ENCODE measurements at regions of chr4 and their contacts with region 1.

Region 1: DNA sequence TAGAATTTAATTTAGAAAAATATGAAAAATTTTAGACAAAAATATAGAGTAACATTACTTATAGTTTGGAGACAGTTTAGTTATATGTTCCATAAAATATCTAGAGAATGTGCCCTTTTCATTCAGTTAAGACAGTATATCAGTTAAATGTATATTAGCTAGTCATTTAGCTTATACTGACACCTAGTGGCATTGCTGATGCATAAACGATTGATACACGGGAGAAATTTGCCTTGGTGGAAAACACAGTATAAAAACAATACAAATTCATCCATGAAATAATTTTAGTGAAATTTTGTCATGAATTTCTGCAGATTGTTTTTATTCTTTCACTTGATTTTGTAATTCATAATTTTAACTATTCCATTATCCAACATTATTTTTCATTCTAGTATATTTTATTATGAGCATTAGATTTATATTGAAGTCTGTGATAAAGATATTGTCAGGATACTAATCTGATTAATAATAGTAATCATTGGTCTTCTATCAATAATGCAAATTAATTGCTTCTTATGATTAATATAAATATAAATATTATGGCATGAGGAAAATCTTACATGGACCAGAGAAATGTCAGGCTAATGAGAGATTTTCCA is 219.0 kb downstream of the TLL1 start:
- DNase-seq: no peak
- H3K4me3 ChIP-seq: no peak overlapping the region
- H3K27ac ChIP-seq: no peak overlapping the region
- H3K4me1 ChIP-seq: peaks cover 0 to 5% (median 0%) of the 10 kb centered on the region in 4 donors
- H3K27me3 ChIP-seq: no peaks in the 10 kb centered on the region
- CTCF ChIP-seq: peak; percentile 65 to 69 (median 68)
- EP300 ChIP-seq: no peak
- POLR2A ChIP-seq: no peak

Region 2: DNA sequence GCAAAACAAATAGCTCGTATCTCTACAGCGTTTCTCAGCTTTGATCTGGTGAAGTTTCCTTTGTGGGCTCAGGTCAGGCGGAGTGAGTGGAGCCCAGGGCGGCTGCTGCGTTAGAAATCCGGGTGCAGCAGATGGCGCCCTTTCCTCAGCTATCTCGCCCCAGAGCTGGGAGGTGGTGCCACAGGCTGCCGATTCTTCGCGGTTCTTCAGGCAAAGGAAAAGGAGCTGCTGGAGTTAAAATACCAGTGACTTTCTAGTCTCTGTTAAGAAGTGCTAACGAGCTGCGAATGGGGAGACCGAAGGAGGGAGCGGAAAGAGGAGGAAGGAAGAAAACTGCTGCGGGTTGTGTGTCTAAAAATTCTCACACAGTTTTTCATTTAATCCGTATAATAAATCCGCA is 598.7 kb before region 1 on chr4:
- intact Hi-C with region 1: loop called (anchors 2 kb)
- DNase-seq: no peak
- H3K4me3 ChIP-seq: peak overlapping the region; percentile 18 to 32 (median 24)
- H3K27ac ChIP-seq: peak overlapping the region in 2 of 4 donors; percentile 22 to 28
- H3K4me1 ChIP-seq: peaks cover 0 to 25% (median 16%) of the 10 kb centered on the region in 4 donors
- H3K27me3 ChIP-seq: no peaks in the 10 kb centered on the region
- CTCF ChIP-seq: peak; percentile 78 to 79 (median 78)
- EP300 ChIP-seq: no peak
- POLR2A ChIP-seq: no peak